Activated naive CD4-positive, alpha-beta T cell treated with anti-CD3 and anti-CD28 coated beads for 36 hours (primary cell): ENCODE measurements at regions of chr19 and their contacts with region 1.

Region 1: GRCh38 chr19:49085020-49085867 is at the start of gene SNRNP70:
- DNase-seq: peak; percentile 99
- H3K4me3 Mint-ChIP-seq: peak within 1 kb of the TSS; percentile 96
- H3K27ac Mint-ChIP-seq: peak within 1 kb of the TSS; percentile 93
- H3K4me1 Mint-ChIP-seq: peaks cover 31% of the 10 kb centered on the region
- H3K27me3 Mint-ChIP-seq: no peaks in the 10 kb centered on the region
- total RNA-seq, gene SNRNP70: 163 to 166 TPM

Region 2: GRCh38 chr19:49127674-49128544 is 42.7 kb after region 1 on chr19:
- CTCF ChIA-PET with region 1: no interaction called
- intact Hi-C with region 1: loop called (anchors 1 kb)
- DNase-seq: peak; percentile 98
- H3K4me3 Mint-ChIP-seq: peak overlapping the region; percentile 94
- H3K27ac Mint-ChIP-seq: peak overlapping the region; percentile 74
- H3K4me1 Mint-ChIP-seq: peaks cover 17% of the 10 kb centered on the region
- H3K27me3 Mint-ChIP-seq: no peaks in the 10 kb centered on the region